ENCODE measurements at regions of chr6 and their contacts with region 1.

Region 1: DNA sequence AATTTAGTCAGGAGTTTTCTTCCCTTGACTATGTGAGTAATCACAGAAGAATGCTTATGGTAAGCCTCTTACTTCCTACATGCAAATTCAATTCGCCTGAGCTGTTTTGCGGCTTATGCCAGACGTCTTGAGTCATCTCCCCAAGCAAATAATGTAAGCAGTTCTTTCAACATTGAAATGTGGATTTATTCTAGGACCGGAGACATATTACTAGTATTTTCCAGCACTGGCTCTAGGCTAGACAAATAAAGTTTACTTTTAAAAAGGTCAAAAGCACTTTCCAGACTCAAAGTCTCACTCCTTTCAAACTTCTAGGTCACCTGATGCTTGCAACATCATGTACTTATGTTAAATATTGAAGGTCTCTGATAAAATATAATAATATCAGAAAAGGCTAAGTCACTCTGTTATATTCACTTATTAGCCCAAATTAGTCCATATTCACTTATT is 38.1 kb upstream of the NOX3 start:
- DNase-seq: peak; percentile 95
- ATAC-seq: peak; percentile 78
- H3K4me3 ChIP-seq: no peak overlapping the region
- H3K27ac ChIP-seq: peak overlapping the region; percentile 96
- H3K4me1 ChIP-seq: peaks cover 44% of the 10 kb centered on the region
- H3K27me3 ChIP-seq: no peaks in the 10 kb centered on the region
- CTCF ChIP-seq: no peak

Region 2: DNA sequence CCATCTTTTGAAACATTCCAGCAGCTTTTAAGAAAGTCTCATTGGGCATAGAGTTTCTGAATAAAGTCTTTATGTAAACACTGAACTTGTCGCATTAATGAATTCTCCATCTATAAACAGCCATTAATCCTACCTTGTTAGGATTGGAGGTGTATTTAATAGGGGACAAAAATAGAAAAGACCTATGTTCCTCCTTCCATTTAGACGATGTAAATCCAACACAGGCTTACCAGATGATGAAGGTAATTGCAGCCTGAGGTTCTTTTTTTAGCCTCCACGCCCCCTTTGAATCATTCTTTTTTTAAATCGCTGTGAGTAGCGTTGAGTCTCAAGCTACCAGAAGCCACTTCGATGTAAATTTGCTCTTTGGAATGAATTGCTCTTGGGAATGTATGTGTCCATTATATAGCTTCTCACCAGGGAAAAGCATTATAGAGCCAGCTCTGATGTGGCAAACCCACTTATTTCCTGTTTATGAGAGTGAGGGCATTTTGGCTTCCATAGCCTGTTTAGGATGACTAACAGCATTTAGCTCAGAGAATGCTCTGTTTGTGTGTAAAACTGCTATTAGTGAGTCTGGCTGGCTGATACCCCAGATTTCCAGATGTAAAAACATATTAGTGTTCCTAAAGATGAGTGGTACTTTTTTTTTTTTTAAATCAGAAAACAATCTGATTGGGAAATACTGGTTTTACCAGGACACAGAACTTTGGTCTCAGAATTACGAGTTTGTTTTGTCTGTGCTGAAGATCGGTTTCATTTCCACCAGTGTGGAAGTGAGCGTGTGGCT is 304.8 kb before region 1 on chr6:
- CTCF ChIA-PET with region 1: no interaction called
- POLR2A ChIA-PET with region 1: no interaction called
- intact Hi-C with region 1: loop called (anchors 10 kb)
- DNase-seq: peak; percentile 88
- ATAC-seq: peak; percentile 65
- H3K4me3 ChIP-seq: peak overlapping the region; percentile 60
- H3K27ac ChIP-seq: peak overlapping the region; percentile 98
- H3K4me1 ChIP-seq: peaks cover 43% of the 10 kb centered on the region
- H3K27me3 ChIP-seq: no peaks in the 10 kb centered on the region
- CTCF ChIP-seq: no peak

Region 3: GRCh38 chr6:155327326-155328073 is 166.2 kb before region 1 on chr6:
- CTCF ChIA-PET with region 1: interaction called, 3 read pairs
- POLR2A ChIA-PET with region 1: no interaction called
- intact Hi-C with region 1: loop called (anchors 1 kb)
- DNase-seq: peak; percentile 65
- ATAC-seq: peak; percentile 63
- H3K4me3 ChIP-seq: no peak overlapping the region
- H3K27ac ChIP-seq: peak overlapping the region; percentile 33
- H3K4me1 ChIP-seq: peaks cover 28% of the 10 kb centered on the region
- H3K27me3 ChIP-seq: no peaks in the 10 kb centered on the region
- CTCF ChIP-seq: peak; percentile 82

Region 4: DNA sequence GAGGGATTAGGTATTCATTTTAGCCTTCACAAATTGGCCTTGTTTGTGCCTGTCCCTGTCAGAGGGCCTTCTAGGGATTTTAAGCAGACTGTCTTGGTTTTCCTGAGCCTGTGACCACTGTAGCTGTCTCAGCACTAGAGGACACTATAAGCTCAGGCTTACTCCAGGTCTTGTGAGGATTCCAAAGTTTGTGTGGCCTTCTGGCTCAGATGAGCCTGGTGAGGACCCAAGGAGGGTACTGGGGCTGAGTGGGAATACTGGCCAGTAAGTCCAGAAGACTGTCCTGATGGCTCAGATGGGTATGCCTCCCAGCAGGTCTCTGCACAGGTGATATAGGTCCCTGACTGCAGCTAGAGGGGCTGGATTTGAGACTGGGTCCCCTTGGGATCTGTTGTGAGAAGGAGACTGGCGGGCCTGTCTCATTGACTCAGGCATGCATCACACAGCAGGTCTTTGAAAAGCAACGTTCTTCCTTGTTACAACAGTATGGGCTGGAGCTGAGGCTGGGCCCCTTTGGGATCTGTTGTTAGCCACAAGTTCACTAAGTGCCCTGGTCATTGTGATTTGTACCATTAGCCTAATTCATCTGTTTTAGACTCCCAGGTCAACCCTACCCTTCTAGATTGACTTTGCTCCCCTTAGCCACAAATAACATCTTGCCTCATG is 153.1 kb before region 1 on chr6:
- CTCF ChIA-PET with region 1: no interaction called
- POLR2A ChIA-PET with region 1: no interaction called
- intact Hi-C with region 1: loop called (anchors 5 kb)
- DNase-seq: peak; percentile 54
- ATAC-seq: peak; percentile 49
- H3K4me3 ChIP-seq: no peak overlapping the region
- H3K27ac ChIP-seq: peak overlapping the region; percentile 95
- H3K4me1 ChIP-seq: peaks cover 14% of the 10 kb centered on the region
- H3K27me3 ChIP-seq: no peaks in the 10 kb centered on the region
- CTCF ChIP-seq: peak; percentile 46; the same call in 1 of the 2 replicates

Region 5: DNA sequence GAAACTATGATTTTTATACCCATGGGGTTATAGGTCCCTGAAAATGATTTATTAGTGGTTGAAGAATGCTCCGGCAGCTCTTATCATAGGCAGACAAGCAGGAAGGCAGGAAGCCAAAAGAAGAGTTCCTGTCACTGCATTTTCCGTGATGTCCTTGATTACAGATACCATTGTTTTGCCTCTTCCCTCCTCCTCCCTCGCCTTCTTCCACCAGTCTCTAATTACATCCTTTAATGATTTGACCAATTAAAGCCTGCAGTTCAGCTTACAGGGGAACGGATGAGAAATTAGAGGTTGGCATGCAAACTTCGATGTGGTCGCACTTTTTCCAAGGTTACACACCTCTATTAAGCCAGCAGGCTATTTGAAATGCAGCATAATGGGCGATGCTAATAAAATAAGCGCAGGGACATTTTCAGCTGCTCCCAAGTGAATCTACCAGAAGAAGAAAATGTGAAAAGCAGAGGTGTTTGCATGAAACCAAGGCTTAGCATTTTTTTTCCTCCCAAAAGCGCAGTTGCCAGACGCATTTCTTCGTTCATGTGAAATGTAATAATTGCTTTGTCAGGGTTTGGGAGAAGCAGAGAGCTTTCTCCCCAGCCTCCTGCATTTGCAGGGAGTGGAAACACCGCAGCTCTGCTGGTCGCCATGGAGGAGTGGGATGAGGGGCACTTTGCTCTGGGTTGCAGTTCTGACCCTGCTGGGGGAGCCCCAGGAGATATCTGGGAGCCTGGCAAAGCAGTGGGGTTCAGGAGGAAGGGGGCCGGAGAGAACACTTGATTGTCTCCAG is 44.1 kb before region 1 on chr6:
- CTCF ChIA-PET with region 1: no interaction called
- POLR2A ChIA-PET with region 1: interaction called, 4 read pairs
- intact Hi-C with region 1: loop called (anchors 5 kb)
- DNase-seq: no peak
- ATAC-seq: no peak
- H3K4me3 ChIP-seq: no peak overlapping the region
- H3K27ac ChIP-seq: no peak overlapping the region
- H3K4me1 ChIP-seq: 0 out of 2 replicates have a peak, but pooled peaks cover under 1% of the 10 kb centered on the region
- H3K27me3 ChIP-seq: no peaks in the 10 kb centered on the region
- CTCF ChIP-seq: no peak

Region 6: GRCh38 chr6:155523821-155524651 is 30.3 kb after region 1 on chr6:
- CTCF ChIA-PET with region 1: no interaction called
- POLR2A ChIA-PET with region 1: no interaction called
- intact Hi-C with region 1: loop called (anchors 2 kb)
- DNase-seq: peak; percentile 81
- ATAC-seq: peak; percentile 87
- H3K4me3 ChIP-seq: no peak overlapping the region
- H3K27ac ChIP-seq: peak overlapping the region; percentile 99
- H3K4me1 ChIP-seq: peaks cover 22% of the 10 kb centered on the region
- H3K27me3 ChIP-seq: no peaks in the 10 kb centered on the region
- CTCF ChIP-seq: no peak

Region 7: GRCh38 chr6:155738602-155739105 is 244.9 kb after region 1 on chr6:
- CTCF ChIA-PET with region 1: no interaction called
- POLR2A ChIA-PET with region 1: no interaction called
- intact Hi-C with region 1: no loop called
- DNase-seq: no peak
- ATAC-seq: no peak
- H3K4me3 ChIP-seq: no peak overlapping the region
- H3K27ac ChIP-seq: no peak overlapping the region
- H3K4me1 ChIP-seq: no peaks in the 10 kb centered on the region
- H3K27me3 ChIP-seq: no peaks in the 10 kb centered on the region
- CTCF ChIP-seq: no peak

Measured in PC-3 (cell line).